H1 (cell line): ENCODE measurements at regions of chr20 and their contacts with region 1.

Region 1: DNA sequence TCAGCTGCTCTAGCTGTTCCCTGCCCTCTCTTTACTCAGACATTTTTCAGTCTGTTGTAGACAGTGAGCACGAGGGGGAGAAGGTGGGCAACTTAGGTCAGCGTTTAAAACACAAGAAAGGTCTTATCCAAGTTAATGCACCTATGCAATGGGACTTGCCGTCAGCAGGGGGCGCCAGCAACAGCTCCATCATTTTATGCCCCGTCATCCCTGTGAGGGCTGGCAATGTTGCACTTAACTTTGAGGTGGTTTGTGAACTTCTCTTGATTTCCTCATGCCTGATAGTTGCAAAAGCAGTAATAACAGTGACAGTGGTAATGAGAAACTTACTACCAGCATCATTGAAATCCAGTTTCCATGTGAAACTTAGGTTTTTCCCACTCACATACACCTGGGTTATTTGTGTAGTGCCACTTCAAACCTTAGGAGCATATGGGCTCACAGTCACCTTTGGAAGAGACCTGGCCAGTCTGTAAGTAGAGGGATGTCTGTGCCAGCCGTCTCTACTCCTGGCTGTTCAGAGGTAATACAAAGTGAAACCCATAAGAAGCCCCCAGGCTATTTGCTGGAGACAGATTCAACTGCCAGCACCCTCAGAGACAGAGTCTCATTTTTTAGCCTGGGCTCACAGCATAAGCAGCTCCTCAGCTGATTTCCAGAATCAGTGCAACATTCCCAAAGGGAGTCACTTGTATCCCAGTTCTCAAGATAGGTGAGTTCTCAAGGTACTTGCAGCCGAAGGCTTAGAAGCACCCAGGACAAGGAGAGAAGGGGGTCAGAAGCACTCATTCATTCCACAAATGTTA is 44.8 kb upstream of the ID1 start:
- DNase-seq: peak in 1 of 2 experiments; percentile 86
- H3K4me3 ChIP-seq: no peak overlapping the region
- H3K27ac ChIP-seq: peak overlapping the region; percentile 44; the same call in 1 of the 2 replicates
- H3K4me1 ChIP-seq: peaks cover 0 to 6% (median under 1%) of the 10 kb centered on the region in 4 experiments; a peak in 3 of 7 replicates
- H3K27me3 ChIP-seq: no peaks in the 10 kb centered on the region
- CTCF ChIP-seq: peak; percentile 96 to 100 (median 99)
- EP300 ChIP-seq: 0 out of 3 replicates have a peak, but pooled peaks of 1 of the 2 experiments have one; percentile 51
- POLR2A ChIP-seq: peak in 1 of 2 experiments; percentile 30; a peak in 2 of 3 replicates
- RAD21 ChIP-seq: peak; percentile 71 to 73

Region 2: GRCh38 chr20:31406115-31406514 is 154.2 kb before region 1 on chr20 and contains the start of gene DEFB121:
- CTCF ChIA-PET with region 1: no interaction called
- POLR2A ChIA-PET with region 1: no interaction called
- DNase-seq: no peak
- H3K4me3 ChIP-seq: no peak within 1 kb of the TSS
- H3K27ac ChIP-seq: no peak within 1 kb of the TSS
- H3K4me1 ChIP-seq: no peaks in the 10 kb centered on the region
- H3K27me3 ChIP-seq: no peaks in the 10 kb centered on the region
- CTCF ChIP-seq: no peak
- EP300 ChIP-seq: no peak
- POLR2A ChIP-seq: no peak
- RAD21 ChIP-seq: no peak
- total RNA-seq, gene DEFB121: not detected in 2 replicates

Region 3: GRCh38 chr20:31474097-31474436 is 86.2 kb before region 1 on chr20:
- CTCF ChIA-PET with region 1: no interaction called
- POLR2A ChIA-PET with region 1: no interaction called
- DNase-seq: no peak
- H3K4me3 ChIP-seq: no peak overlapping the region
- H3K27ac ChIP-seq: no peak overlapping the region
- H3K4me1 ChIP-seq: no peaks in the 10 kb centered on the region
- H3K27me3 ChIP-seq: no peaks in the 10 kb centered on the region
- CTCF ChIP-seq: no peak
- EP300 ChIP-seq: no peak
- POLR2A ChIP-seq: no peak
- RAD21 ChIP-seq: no peak

Region 4: GRCh38 chr20:31523361-31524283 is 36.7 kb before region 1 on chr20:
- CTCF ChIA-PET with region 1: interaction called, 17 read pairs
- POLR2A ChIA-PET with region 1: no interaction called
- DNase-seq: no peak
- H3K4me3 ChIP-seq: no peak overlapping the region
- H3K27ac ChIP-seq: no peak overlapping the region
- H3K4me1 ChIP-seq: no peaks in the 10 kb centered on the region
- H3K27me3 ChIP-seq: no peaks in the 10 kb centered on the region
- CTCF ChIP-seq: no peak
- EP300 ChIP-seq: no peak
- POLR2A ChIP-seq: no peak
- RAD21 ChIP-seq: no peak

Region 5: DNA sequence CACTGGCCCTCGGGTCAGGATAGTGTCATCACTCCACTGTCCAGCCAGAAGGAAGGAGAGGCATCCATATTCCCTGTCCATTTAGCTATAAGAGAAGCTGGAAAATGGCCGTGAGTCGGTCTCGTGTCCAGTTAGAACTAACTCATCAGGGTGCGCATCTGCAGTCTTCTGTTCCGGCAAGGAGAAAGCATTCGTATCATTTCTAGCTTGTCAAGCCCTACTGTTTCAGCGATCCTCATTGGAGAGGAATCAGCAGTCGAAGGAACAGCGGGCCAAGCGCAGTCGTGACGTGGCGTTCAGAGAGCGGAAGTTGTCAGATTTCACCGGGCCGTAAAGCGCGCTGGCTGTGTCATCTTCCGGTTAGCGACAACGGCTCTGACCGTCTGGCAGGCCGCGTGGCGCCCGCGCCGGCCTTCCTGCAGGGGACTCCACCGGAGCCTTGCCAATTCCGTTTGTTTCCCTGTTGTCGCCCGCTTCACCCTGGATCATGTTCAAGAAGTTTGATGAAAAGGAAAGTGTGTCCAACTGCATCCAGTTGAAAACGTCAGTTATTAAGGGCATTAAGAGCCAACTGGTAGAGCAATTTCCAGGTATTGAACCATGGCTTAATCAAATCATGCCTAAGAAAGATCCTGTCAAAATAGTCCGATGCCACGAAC is 13.2 kb before region 1 on chr20:
- CTCF ChIA-PET with region 1: interaction called, 216 read pairs
- POLR2A ChIA-PET with region 1: interaction called, 24 read pairs
- DNase-seq: peak in 1 of 2 experiments; percentile 78
- H3K4me3 ChIP-seq: peak overlapping the region; percentile 47 to 79 (median 72)
- H3K27ac ChIP-seq: peak overlapping the region; percentile 86
- H3K4me1 ChIP-seq: no peaks in the 10 kb centered on the region; a peak in 3 of 7 replicates
- H3K27me3 ChIP-seq: no peaks in the 10 kb centered on the region
- CTCF ChIP-seq: peak in 1 of 3 experiments; percentile 21; a peak in 1 of 4 replicates
- EP300 ChIP-seq: no peak
- POLR2A ChIP-seq: peak; percentile 86 to 96
- RAD21 ChIP-seq: no peak

Region 6: GRCh38 chr20:31572701-31573554 is 12.6 kb after region 1 on chr20:
- CTCF ChIA-PET with region 1: interaction called, 216 read pairs
- POLR2A ChIA-PET with region 1: interaction called, 32 read pairs
- DNase-seq: peak; percentile 88 to 92
- H3K4me3 ChIP-seq: peak overlapping the region; percentile 34 to 54 (median 45)
- H3K27ac ChIP-seq: peak overlapping the region; percentile 86
- H3K4me1 ChIP-seq: peaks cover 13 to 36% (median 27%) of the 10 kb centered on the region in 4 experiments
- H3K27me3 ChIP-seq: no peaks in the 10 kb centered on the region
- CTCF ChIP-seq: 0 out of 4 replicates have a peak, but pooled peaks of 1 of the 3 experiments have one; percentile 19
- EP300 ChIP-seq: peak; percentile 3 to 94
- POLR2A ChIP-seq: peak; percentile 98
- RAD21 ChIP-seq: peak in 1 of 2 experiments; percentile 28; a peak in 2 of 4 replicates

Region 7: GRCh38 chr20:31580706-31581105 is 20.4 kb after region 1 on chr20:
- CTCF ChIA-PET with region 1: interaction called, 50 read pairs
- POLR2A ChIA-PET with region 1: interaction called, 6 read pairs
- DNase-seq: no peak
- H3K4me3 ChIP-seq: peak overlapping the region in 1 of 4 experiments; percentile 6; a peak in 1 of 8 replicates
- H3K27ac ChIP-seq: peak overlapping the region; percentile 59; the same call in 1 of the 2 replicates
- H3K4me1 ChIP-seq: peaks cover 9 to 19% (median 14%) of the 10 kb centered on the region in 4 experiments
- H3K27me3 ChIP-seq: no peaks in the 10 kb centered on the region
- CTCF ChIP-seq: no peak
- EP300 ChIP-seq: no peak
- POLR2A ChIP-seq: no peak; a peak in 1 of 3 replicates
- RAD21 ChIP-seq: no peak

Region 8: DNA sequence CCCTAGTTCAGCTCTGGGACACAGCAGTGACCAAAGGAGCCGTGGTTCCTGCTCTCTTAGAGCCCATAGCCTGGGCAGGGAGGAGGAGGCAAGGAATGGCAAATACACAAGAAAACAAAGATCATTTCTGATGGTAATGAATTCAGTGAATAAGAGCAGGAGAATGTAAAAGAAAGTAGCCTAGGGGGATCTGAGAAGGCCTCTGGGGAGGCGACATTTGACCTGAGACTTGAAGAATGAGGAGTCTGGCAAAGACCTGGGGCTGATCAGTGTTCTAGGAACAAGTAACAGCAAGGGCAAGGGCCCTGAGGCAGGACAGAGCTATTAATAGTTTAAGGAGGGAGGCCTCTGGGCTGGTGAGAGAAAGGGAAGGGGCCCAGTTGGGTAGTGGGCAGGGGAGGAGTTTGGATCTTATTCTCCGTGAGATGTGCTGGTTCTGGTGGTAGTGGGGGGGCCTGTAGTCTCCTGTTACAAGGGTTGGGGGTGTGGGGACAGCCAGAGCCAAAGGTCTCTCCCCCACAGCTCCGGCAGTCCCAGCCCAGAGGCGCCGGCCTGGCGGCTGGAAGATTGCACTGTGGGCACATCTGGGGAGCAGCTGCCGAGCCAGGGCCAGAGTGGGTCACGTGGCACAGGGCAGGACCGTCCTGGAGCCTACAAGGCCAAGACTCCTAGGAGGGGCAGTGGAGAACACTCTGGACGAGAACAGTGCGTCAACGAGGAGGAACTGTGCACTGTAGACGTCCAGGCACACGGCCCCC is 35.5 kb after region 1 on chr20:
- CTCF ChIA-PET with region 1: interaction called, 1,559 read pairs
- POLR2A ChIA-PET with region 1: interaction called, 1,033 read pairs
- DNase-seq: peak; percentile 78 to 90
- H3K4me3 ChIP-seq: peak overlapping the region in 1 of 4 experiments; percentile 16; a peak in 1 of 8 replicates
- H3K27ac ChIP-seq: peak overlapping the region; percentile 69; the same call in 1 of the 2 replicates
- H3K4me1 ChIP-seq: peaks cover 23 to 32% (median 24%) of the 10 kb centered on the region in 4 experiments
- H3K27me3 ChIP-seq: no peaks in the 10 kb centered on the region
- CTCF ChIP-seq: no peak; a peak in 1 of 4 replicates
- EP300 ChIP-seq: peak in 1 of 2 experiments; percentile 84; a peak in 1 of 3 replicates
- POLR2A ChIP-seq: peak in 1 of 2 experiments; percentile 53; a peak in 1 of 3 replicates
- RAD21 ChIP-seq: no peak

Region 9: DNA sequence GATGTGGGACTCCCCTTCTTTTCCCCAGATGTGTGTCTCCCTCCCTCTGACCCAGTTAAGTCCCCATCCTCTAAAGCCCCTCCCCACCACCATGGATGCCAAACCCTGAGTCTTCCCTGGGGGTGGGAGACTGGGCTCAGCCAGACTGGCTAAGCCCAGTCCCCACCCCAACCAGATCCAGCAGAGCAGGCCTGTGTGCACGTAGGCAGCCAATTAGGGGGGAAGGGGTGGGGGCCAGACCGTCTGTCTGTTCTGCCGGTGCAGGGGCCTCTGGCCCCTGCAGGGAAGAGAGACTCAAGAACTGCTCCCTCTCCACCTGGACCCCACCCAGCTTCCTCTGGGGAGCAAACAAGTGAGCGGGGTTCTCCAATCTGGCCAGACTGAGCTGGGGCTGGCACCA is 78.0 kb after region 1 on chr20:
- CTCF ChIA-PET with region 1: interaction called, 83 read pairs
- POLR2A ChIA-PET with region 1: no interaction called
- DNase-seq: no peak
- H3K4me3 ChIP-seq: no peak overlapping the region
- H3K27ac ChIP-seq: no peak overlapping the region
- H3K4me1 ChIP-seq: peaks cover 0 to 2% (median 0%) of the 10 kb centered on the region in 4 experiments; a peak in 2 of 7 replicates
- H3K27me3 ChIP-seq: no peaks in the 10 kb centered on the region
- CTCF ChIP-seq: no peak
- EP300 ChIP-seq: no peak
- POLR2A ChIP-seq: no peak
- RAD21 ChIP-seq: no peak